ENCODE measurements at regions of chr12 and their contacts with region 1.

Region 1: GRCh38 chr12:58186914-58187313 is 245.5 kb downstream of the ATP23 start:
- DNase-seq: no peak
- H3K4me3 ChIP-seq: no peak overlapping the region
- H3K27ac ChIP-seq: no peak overlapping the region
- H3K4me1 ChIP-seq: no peaks in the 10 kb centered on the region
- H3K27me3 ChIP-seq: no peaks in the 10 kb centered on the region
- CTCF ChIP-seq: no peak

Region 2: GRCh38 chr12:57078519-57079404 is 1108.2 kb before region 1 on chr12 and contains the start of gene NEMP1:
- intact Hi-C with region 1: no loop called
- DNase-seq: peak; percentile 98 to 99
- H3K4me3 ChIP-seq: peak within 1 kb of the TSS; percentile 68 to 70
- H3K27ac ChIP-seq: peak within 1 kb of the TSS; percentile 76 to 81
- H3K4me1 ChIP-seq: peaks cover 7 to 11% of the 10 kb centered on the region in 2 donors
- H3K27me3 ChIP-seq: no peaks in the 10 kb centered on the region
- CTCF ChIP-seq: no peak
- total RNA-seq, gene NEMP1: 7.7 TPM

Region 3: GRCh38 chr12:57905812-57906475 is 281.0 kb before region 1 on chr12:
- intact Hi-C with region 1: no loop called
- DNase-seq: no peak
- H3K4me3 ChIP-seq: no peak overlapping the region
- H3K27ac ChIP-seq: no peak overlapping the region
- H3K4me1 ChIP-seq: peaks cover 0 to 5% of the 10 kb centered on the region in 2 donors
- H3K27me3 ChIP-seq: no peaks in the 10 kb centered on the region
- CTCF ChIP-seq: no peak

Region 4: DNA sequence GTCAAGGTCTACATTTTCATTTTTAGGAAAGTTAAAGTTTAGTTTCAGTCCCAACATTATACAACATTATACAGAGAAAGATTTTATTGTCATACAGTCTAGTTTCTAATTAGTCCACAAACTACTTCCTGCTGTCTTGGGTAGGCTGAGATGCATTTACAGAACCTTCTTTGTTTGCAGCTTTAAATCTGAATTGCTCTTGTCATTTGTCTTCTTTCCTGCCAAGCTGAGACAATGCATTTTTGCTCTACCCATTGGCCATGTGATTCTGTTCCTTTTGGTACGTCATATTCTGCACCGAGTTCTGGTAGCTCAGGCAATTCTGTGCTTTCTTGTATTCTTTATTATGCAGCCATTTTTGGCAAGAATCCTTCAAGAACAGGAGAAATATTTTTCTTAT is 17.1 kb before region 1 on chr12:
- intact Hi-C with region 1: no loop called
- DNase-seq: no peak
- H3K4me3 ChIP-seq: no peak overlapping the region
- H3K27ac ChIP-seq: no peak overlapping the region
- H3K4me1 ChIP-seq: no peaks in the 10 kb centered on the region
- H3K27me3 ChIP-seq: no peaks in the 10 kb centered on the region
- CTCF ChIP-seq: no peak

Region 5: GRCh38 chr12:58233886-58234285 is 47.0 kb after region 1 on chr12:
- intact Hi-C with region 1: loop called (anchors 2 kb)
- DNase-seq: no peak
- H3K4me3 ChIP-seq: no peak overlapping the region
- H3K27ac ChIP-seq: no peak overlapping the region
- H3K4me1 ChIP-seq: no peaks in the 10 kb centered on the region
- H3K27me3 ChIP-seq: no peaks in the 10 kb centered on the region
- CTCF ChIP-seq: no peak

Region 6: DNA sequence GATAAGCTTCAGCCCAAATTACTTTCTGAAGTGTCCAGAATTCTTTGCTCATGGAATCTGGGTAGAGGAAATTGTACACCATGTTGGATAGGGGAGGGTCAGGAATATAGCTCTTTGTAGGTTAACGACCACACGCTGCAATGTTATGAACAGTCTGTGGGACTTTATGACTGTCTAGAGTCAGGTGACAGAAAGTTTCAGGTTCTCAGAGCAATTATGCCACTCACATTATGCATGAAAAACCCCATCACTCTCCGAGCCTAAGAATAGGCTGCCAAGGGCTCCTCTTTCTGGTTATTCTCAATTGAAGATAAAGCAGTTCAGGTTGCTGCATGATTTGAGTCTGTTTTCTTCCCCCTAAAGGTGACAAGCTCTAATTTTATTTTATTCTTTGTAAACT is 185.4 kb after region 1 on chr12:
- intact Hi-C with region 1: no loop called
- DNase-seq: no peak
- H3K4me3 ChIP-seq: no peak overlapping the region
- H3K27ac ChIP-seq: no peak overlapping the region
- H3K4me1 ChIP-seq: no peaks in the 10 kb centered on the region
- H3K27me3 ChIP-seq: no peaks in the 10 kb centered on the region
- CTCF ChIP-seq: no peak